Heart left ventricle (tissue), 16 donors: ENCODE measurements at regions of chr10 and their contacts with region 1.

Region 1: DNA sequence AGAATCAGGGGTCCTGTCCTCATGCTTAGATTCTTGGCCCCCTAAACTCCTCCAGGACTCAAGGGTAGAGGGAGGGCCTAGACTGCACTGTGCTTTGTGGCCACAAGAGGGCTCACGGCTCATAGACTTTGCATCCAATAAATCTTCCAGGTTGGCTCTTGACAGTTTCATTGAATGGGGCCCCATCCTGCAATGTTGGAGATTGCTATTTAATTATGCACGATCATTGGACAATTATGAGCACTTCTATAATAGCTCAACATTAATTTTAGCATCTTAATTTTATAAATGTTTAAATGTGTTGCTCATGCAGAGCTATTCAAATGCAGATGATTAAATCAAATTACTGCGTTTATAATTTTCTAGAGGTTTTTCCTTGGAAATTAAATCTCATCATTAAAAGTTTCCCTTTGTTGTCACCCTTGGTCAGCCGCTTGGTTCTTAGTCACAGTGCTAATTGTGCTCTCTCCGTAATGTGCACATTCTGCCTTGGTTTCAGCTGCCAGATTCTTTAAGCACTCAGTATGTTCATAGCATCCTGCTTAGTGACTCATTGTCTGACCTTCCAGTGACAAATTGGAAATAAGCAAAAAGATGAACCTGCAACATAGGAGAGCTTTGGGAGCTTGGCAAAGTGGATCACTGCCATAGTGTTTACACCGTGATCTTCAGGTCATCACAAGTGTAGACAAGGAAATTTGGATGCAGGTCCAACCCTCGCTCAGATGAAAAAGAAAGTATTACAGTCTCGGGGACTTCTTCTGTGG is 33.4 kb upstream of the PLPP4 start:
- DNase-seq: no peak
- ATAC-seq: no peak
- H3K4me3 ChIP-seq: no peak overlapping the region
- H3K27ac ChIP-seq: no peak overlapping the region
- H3K4me1 ChIP-seq: no peaks in the 10 kb centered on the region
- H3K27me3 ChIP-seq: peaks cover 0 to 3% (median 0%) of the 10 kb centered on the region in 9 donors
- CTCF ChIP-seq: peak; percentile 41 to 69 (median 56)
- POLR2A ChIP-seq: no peak

Region 2: GRCh38 chr10:120735773-120736371 is 312.3 kb after region 1 on chr10:
- intact Hi-C with region 1: loop called in 5 of 10 experiments (anchors 5 to 10 kb)
- DNase-seq: no peak
- ATAC-seq: no peak
- H3K4me3 ChIP-seq: no peak overlapping the region
- H3K27ac ChIP-seq: no peak overlapping the region
- H3K4me1 ChIP-seq: no peaks in the 10 kb centered on the region
- H3K27me3 ChIP-seq: peaks cover 0 to 17% (median 0%) of the 10 kb centered on the region in 9 donors
- CTCF ChIP-seq: peak; percentile 29 to 67 (median 48)
- POLR2A ChIP-seq: no peak